Mucosa of descending colon (tissue), 3 donors: ENCODE measurements at regions of chr10 and their contacts with region 1.

Region 1: DNA sequence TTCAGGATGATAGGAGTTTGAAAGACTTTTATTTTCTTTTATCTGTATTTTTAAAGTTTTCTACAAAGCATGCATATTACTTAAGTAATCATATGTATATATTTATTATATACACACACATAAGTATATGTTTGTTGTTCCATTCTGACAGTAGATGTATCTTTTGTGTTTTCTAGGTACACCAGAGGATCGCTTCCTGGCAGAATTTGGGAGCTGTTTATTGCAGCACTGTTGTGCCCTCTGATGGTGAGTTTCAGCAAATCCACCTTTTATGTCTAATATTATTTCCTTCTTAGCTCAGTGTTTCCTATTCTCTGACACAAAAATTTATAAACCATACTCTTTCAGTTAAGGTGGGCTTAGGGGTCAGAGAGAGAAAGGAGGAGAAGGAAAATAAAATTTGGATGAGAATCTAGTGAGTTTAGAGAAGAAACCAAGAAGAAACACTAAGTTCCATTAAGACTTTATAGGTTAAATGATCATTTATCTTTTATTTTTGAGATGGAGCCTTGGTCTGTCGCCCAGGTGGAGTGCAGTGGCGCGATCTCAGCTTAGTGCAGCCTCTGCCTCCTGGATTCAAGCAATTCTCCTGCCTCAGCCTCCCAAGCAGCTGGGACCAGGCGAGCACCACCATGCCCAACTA is 59.2 kb upstream of the OIT3 start:
- DNase-seq: peak in 1 of 3 donors; percentile 57
- ATAC-seq: peak; percentile 49
- H3K4me3 ChIP-seq: peak overlapping the region; percentile 0
- H3K4me1 ChIP-seq: peaks cover 5% of the 10 kb centered on the region
- CTCF ChIP-seq: no peak

Region 2: DNA sequence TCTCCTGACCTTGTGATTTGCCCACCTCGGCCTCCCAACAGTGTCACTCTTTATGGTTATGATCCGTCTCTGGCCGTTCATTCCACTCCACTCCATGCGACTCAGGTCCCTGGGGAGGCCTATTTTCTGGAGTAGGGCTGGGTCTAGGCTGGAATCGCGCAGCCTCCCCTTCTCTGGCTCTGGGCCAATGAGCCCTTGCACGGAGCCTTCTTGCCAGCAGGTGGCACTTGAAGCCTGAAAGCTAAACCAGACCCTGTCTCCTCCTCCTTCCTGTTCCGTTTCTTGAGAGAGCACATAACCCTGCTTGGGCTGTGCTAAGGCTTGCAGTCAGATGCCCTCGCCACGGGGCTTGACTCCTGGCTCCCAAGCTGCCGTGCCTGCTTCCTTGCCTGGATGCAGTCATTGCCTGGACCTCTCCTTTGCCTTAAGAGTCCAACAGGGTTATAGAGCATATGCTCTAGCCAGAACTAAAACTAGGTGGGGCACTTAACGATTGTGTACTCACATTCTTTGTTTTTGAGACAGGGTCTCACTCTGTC is 470.0 kb before region 1 on chr10:
- intact Hi-C with region 1: loop called (anchors 10 kb)
- DNase-seq: peak; percentile 82 to 94 (median 90)
- ATAC-seq: peak; percentile 99
- H3K4me3 ChIP-seq: no peak overlapping the region
- H3K4me1 ChIP-seq: peaks cover 6% of the 10 kb centered on the region
- CTCF ChIP-seq: peak; percentile 76

Region 3: GRCh38 chr10:72692057-72692910 is 142.0 kb before region 1 on chr10 and contains the start of gene MCU:
- intact Hi-C with region 1: loop called (anchors 10 kb)
- DNase-seq: peak; percentile 96 to 98 (median 96)
- ATAC-seq: peak; percentile 91
- H3K4me3 ChIP-seq: peak within 1 kb of the TSS; percentile 74
- H3K4me1 ChIP-seq: peaks cover 25% of the 10 kb centered on the region
- CTCF ChIP-seq: no peak
- total RNA-seq, gene MCU: 44.8 to 98.6 (median 89.0) TPM

Region 4: DNA sequence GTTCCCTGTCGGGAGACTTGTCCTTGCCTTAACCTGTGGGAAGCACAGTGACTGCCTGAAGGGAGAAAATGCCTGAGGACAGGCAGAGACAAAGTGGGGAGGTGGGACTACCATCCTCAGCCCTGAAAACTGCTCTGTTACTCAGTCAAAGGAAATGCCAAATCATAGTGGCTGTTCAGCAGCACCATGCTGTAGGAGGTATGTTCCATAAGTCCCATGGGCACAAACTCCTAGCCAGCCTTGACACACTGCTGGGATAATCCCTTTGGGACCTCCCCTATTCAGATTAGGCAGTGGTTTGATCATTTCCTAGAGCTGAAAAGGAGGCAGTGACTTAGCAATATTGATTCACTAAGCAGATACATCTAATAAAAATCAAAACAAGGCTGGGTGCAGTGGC is 62.3 kb before region 1 on chr10:
- intact Hi-C with region 1: no loop called
- DNase-seq: no peak
- ATAC-seq: no peak
- H3K4me3 ChIP-seq: no peak overlapping the region
- H3K4me1 ChIP-seq: no peaks in the 10 kb centered on the region
- CTCF ChIP-seq: no peak